ENCODE measurements at regions of chr1 and their contacts with region 1.

Region 1: GRCh38 chr1:52056163-52056936 is at the start of gene BTF3L4:
- DNase-seq: peak; percentile 87
- ATAC-seq: peak; percentile 88
- H3K4me3 Mint-ChIP-seq: peak within 1 kb of the TSS; percentile 100
- H3K27ac Mint-ChIP-seq: peak within 1 kb of the TSS; percentile 98
- H3K4me1 Mint-ChIP-seq: peaks cover 48% of the 10 kb centered on the region
- H3K27me3 Mint-ChIP-seq: no peaks in the 10 kb centered on the region
- CTCF ChIP-seq: no peak
- total RNA-seq, gene BTF3L4: 32.8 and 36.2 TPM in 2 replicates

Region 2: DNA sequence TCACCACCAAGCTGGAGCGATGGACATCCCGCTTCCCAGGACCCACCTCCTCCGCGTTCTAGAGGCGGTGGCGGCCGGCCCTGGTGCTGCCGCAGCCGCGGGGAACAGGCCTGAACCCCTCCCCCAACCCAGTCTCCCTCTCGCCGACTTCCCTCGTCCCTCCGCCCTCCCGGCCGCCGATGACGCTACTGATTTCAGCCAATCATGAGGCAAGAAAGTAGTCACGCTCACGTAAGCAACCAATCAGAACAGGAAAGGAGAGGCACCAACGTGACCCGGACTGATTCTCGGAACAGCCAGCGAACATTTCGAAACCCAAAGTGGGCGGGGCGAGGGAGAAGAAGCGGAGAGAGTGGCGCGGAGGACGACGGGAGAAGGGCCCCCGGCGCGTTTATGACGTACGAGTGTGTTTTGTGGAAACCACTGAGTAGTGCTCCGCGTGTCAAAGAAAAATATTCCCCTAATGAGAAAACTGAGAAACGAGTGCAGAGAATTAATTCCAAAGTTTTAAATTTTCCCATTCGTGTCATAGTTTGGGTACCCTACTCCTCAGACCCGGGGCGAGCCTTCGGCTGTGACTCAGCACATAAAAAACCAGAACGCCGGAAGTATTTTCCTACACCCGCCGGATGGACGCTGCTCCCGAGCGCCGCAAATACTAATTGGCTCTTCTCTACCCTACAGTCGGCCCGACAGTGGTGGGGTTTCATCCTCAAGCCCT is 177.6 kb before region 1 on chr1 and contains the start of gene NRDC:
- CTCF ChIA-PET with region 1: no interaction called
- POLR2A ChIA-PET with region 1: interaction called, 4 read pairs
- intact Hi-C with region 1: loop called (anchors 1 kb)
- DNase-seq: peak; percentile 93
- ATAC-seq: peak; percentile 90
- H3K4me3 Mint-ChIP-seq: no peak within 1 kb of the TSS
- H3K27ac Mint-ChIP-seq: no peak within 1 kb of the TSS
- H3K4me1 Mint-ChIP-seq: peaks cover 29% of the 10 kb centered on the region
- H3K27me3 Mint-ChIP-seq: no peaks in the 10 kb centered on the region
- CTCF ChIP-seq: no peak
- total RNA-seq, gene NRDC: 157 and 162 TPM in 2 replicates

Region 3: GRCh38 chr1:52365746-52366516 is 309.6 kb after region 1 on chr1 and contains the start of gene CC2D1B:
- CTCF ChIA-PET with region 1: no interaction called
- POLR2A ChIA-PET with region 1: interaction called, 5 read pairs
- intact Hi-C with region 1: loop called (anchors 1 kb)
- DNase-seq: peak; percentile 100
- ATAC-seq: peak; percentile 95
- H3K4me3 Mint-ChIP-seq: peak within 1 kb of the TSS; percentile 94
- H3K27ac Mint-ChIP-seq: peak within 1 kb of the TSS; percentile 88
- H3K4me1 Mint-ChIP-seq: peaks cover 30% of the 10 kb centered on the region
- H3K27me3 Mint-ChIP-seq: peaks cover 2% of the 10 kb centered on the region
- CTCF ChIP-seq: no peak
- total RNA-seq, gene CC2D1B: 51.3 and 66.4 TPM in 2 replicates

Region 4: GRCh38 chr1:52558941-52559340 is 502.6 kb after region 1 on chr1:
- CTCF ChIA-PET with region 1: no interaction called
- POLR2A ChIA-PET with region 1: interaction called, 10 read pairs
- intact Hi-C with region 1: loop called (anchors 10 kb)
- DNase-seq: no peak
- ATAC-seq: no peak
- H3K4me3 Mint-ChIP-seq: no peak overlapping the region
- H3K27ac Mint-ChIP-seq: no peak overlapping the region
- H3K4me1 Mint-ChIP-seq: peaks cover 10% of the 10 kb centered on the region
- H3K27me3 Mint-ChIP-seq: no peaks in the 10 kb centered on the region
- CTCF ChIP-seq: no peak

Region 5: GRCh38 chr1:53196485-53197270 is 1140.3 kb after region 1 on chr1 and contains the start of gene CPT2:
- CTCF ChIA-PET with region 1: no interaction called
- POLR2A ChIA-PET with region 1: no interaction called
- intact Hi-C with region 1: loop called (anchors 10 kb)
- DNase-seq: peak; percentile 89
- ATAC-seq: peak; percentile 99
- H3K4me3 Mint-ChIP-seq: peak within 1 kb of the TSS; percentile 92
- H3K27ac Mint-ChIP-seq: peak within 1 kb of the TSS; percentile 94
- H3K4me1 Mint-ChIP-seq: peaks cover 25% of the 10 kb centered on the region
- H3K27me3 Mint-ChIP-seq: no peaks in the 10 kb centered on the region
- CTCF ChIP-seq: no peak
- total RNA-seq, gene CPT2: 12.5 and 15.7 TPM in 2 replicates

Region 6: GRCh38 chr1:54052934-54053744 is 1996.8 kb after region 1 on chr1 and contains the starts of genes TCEANC2 and TMEM59:
- CTCF ChIA-PET with region 1: no interaction called
- POLR2A ChIA-PET with region 1: no interaction called
- intact Hi-C with region 1: loop called (anchors 10 kb)
- DNase-seq: peak; percentile 92
- ATAC-seq: peak; percentile 92
- H3K4me3 Mint-ChIP-seq: no peak within 1 kb of the TSS
- H3K27ac Mint-ChIP-seq: no peak within 1 kb of the TSS
- H3K4me1 Mint-ChIP-seq: peaks cover 38% of the 10 kb centered on the region
- H3K27me3 Mint-ChIP-seq: no peaks in the 10 kb centered on the region
- CTCF ChIP-seq: no peak
- total RNA-seq, gene TCEANC2: 7.3 and 8.1 TPM in 2 replicates
- total RNA-seq, gene TMEM59: 103 and 123 TPM in 2 replicates